ENCODE measurements at regions of chr7 and their contacts with region 1.

Region 1: GRCh38 chr7:106112117-106112971 is at the start of gene SYPL1:
- DNase-seq: peak; percentile 62 to 95 (median 90)

Region 2: DNA sequence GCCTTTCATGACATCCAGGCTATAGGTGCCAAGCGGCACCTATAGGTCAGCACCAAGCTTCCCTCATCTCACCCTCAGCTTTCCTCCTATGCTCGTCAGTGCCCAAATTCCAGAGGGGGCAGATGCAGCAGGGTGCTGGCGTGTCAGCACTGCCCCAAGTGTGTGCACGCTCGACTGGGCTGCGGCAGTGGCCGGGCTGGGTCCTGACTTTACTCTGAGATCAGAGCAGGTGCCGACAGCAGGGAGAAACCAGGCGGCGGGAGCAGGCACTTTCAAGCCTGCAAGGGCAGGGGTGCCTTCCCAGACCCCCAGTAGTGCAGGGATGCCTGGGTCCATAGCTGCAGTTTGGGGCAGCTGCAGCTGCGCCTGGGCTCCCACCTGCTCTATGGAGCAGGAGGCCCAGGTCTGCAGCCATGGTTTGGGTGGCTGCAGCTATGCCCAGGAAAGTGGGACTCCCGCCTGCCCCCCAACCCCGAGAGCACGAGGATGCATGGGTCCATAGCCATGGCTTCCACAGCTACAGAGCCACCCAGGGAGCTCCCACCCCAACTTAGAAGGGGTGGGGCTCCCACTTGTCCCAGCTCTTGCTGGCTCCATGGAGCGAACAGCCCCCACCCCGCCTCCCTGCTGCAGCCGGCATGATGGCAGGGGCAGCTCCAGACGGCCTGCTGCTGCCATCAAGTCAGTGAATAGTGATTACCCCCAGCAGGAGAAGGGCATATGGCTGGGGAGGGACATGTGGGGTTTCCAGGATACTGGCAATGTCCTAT is 1297.5 kb before region 1 on chr7:
- intact Hi-C with region 1: no loop called
- DNase-seq: peak in 2 of 42 donors; percentile 21 to 24

Region 3: GRCh38 chr7:106022193-106022821 is 90.0 kb before region 1 on chr7:
- intact Hi-C with region 1: no loop called
- DNase-seq: no peak

Region 4: GRCh38 chr7:106056513-106057203 is 55.7 kb before region 1 on chr7:
- intact Hi-C with region 1: loop called (anchors 5 kb)
- DNase-seq: peak; percentile 46 to 92 (median 78)

Region 5: DNA sequence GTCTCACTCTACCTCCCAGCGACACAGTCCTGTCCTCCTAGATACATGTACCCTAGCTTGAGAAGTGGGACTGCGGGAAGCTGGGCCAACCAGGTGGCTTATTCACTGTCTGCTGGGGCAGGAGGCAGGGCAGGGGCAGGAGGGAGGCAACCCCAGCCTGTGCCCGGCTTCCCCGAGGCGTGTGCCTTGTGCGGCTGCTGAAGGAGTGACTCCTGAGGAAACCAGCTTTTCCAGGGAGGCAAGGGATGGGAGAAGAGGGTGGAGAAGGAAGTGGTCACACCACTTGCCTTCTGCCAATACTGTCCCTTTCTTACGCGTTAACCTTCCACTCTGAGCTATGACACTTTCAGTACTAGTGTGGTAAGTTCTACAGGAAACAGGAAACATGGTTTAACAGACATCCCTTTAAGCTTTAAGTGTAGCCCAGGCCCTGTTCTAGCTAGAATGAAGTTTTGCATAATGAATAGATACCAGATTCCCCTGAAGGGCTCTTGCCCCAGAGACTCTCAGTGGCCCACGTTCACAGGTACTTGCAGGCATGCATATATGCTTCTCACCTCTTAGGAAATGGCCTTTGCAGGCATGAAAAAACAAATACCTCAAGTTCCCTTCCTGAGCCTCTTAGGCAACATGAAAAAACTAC is 40.9 kb before region 1 on chr7:
- intact Hi-C with region 1: no loop called
- DNase-seq: no peak